A673 (cell line): ENCODE measurements at regions of chr7 and their contacts with region 1.

Region 1: DNA sequence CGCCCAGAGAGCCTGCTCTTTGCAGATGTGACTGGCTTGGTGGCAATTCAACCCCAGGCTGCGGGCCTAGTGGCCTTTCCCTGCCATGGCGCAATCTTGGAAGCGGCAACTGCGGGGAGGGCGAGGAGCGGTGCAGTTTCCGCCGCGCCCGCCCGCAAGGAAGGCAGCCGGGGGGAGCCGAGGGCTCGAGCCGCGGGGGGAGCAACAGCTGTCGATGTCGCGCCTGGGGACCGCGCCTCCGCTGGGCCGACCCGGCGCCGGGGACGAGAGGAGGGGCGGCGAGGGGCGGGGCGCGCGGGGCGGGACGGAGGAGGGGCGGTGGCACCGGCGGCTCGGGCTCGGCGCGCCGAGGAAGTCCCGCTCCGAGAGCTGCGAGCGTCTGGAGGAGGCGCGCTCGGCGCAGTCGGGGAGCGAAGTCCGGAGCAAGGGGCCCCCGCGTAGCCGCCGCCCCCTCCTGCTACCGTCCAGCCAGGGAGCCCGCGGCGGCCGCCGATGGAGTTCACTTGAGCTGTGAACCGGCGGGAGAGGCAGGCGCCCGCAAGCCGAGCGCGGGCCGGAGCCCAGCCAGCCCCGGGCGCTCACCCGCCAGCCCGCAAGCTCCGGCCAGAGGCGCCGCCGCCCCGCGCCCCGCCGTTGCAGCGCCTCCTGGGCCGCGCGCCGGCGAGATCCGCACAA is 438.1 kb upstream of the GALNT17 start:
- DNase-seq: peak; percentile 73
- H3K4me3 ChIP-seq: peak overlapping the region; percentile 82
- H3K27ac ChIP-seq: no peak overlapping the region
- H3K4me1 ChIP-seq: peaks cover 22% of the 10 kb centered on the region
- H3K27me3 ChIP-seq: peaks cover 19% of the 10 kb centered on the region
- CTCF ChIP-seq: no peak

Region 2: DNA sequence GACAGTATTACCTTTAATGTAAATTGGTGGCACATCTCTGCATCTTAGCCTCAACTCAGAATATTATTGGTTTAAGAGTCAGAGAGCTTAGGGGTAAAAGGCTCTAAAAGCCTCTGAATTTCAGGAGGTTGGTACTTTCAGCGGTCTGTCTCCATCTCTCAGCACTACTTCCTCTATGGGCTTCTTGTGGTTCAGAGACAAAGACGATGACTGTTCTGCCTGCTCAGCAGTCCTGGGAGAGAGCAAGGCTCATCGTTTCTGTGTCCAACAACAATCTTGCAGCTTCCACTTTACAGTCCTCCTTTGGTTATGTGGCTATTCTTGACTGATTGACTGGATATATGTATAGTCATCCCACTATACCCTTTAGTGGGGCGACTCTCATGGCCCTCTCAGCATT is 700.9 kb before region 1 on chr7:
- CTCF ChIA-PET with region 1: no interaction called
- POLR2A ChIA-PET with region 1: interaction called, 11 read pairs
- intact Hi-C with region 1: no loop called
- DNase-seq: no peak
- H3K4me3 ChIP-seq: no peak overlapping the region
- H3K27ac ChIP-seq: no peak overlapping the region
- H3K4me1 ChIP-seq: peaks cover 11% of the 10 kb centered on the region
- H3K27me3 ChIP-seq: no peaks in the 10 kb centered on the region
- CTCF ChIP-seq: no peak

Region 3: GRCh38 chr7:70072220-70072619 is 621.6 kb before region 1 on chr7:
- CTCF ChIA-PET with region 1: no interaction called
- POLR2A ChIA-PET with region 1: interaction called, 17 read pairs
- intact Hi-C with region 1: no loop called
- DNase-seq: no peak
- H3K4me3 ChIP-seq: no peak overlapping the region
- H3K27ac ChIP-seq: no peak overlapping the region
- H3K4me1 ChIP-seq: no peaks in the 10 kb centered on the region
- H3K27me3 ChIP-seq: no peaks in the 10 kb centered on the region
- CTCF ChIP-seq: no peak

Region 4: GRCh38 chr7:70098133-70098561 is 595.7 kb before region 1 on chr7:
- CTCF ChIA-PET with region 1: no interaction called
- POLR2A ChIA-PET with region 1: interaction called, 11 read pairs
- intact Hi-C with region 1: no loop called
- DNase-seq: peak; percentile 95
- H3K4me3 ChIP-seq: no peak overlapping the region
- H3K27ac ChIP-seq: no peak overlapping the region
- H3K4me1 ChIP-seq: peaks cover 47% of the 10 kb centered on the region
- H3K27me3 ChIP-seq: peaks cover 56% of the 10 kb centered on the region
- CTCF ChIP-seq: no peak

Region 5: GRCh38 chr7:70156057-70156456 is 537.8 kb before region 1 on chr7:
- CTCF ChIA-PET with region 1: no interaction called
- POLR2A ChIA-PET with region 1: no interaction called
- intact Hi-C with region 1: loop called (anchors 2 kb)
- DNase-seq: no peak
- H3K4me3 ChIP-seq: no peak overlapping the region
- H3K27ac ChIP-seq: no peak overlapping the region
- H3K4me1 ChIP-seq: peaks cover 4% of the 10 kb centered on the region
- H3K27me3 ChIP-seq: no peaks in the 10 kb centered on the region
- CTCF ChIP-seq: no peak

Region 6: GRCh38 chr7:70193514-70193913 is 500.3 kb before region 1 on chr7:
- CTCF ChIA-PET with region 1: no interaction called
- POLR2A ChIA-PET with region 1: no interaction called
- intact Hi-C with region 1: loop called (anchors 5 kb)
- DNase-seq: peak; percentile 39
- H3K4me3 ChIP-seq: no peak overlapping the region
- H3K27ac ChIP-seq: no peak overlapping the region
- H3K4me1 ChIP-seq: peaks cover 7% of the 10 kb centered on the region
- H3K27me3 ChIP-seq: no peaks in the 10 kb centered on the region
- CTCF ChIP-seq: peak; percentile 55

Region 7: GRCh38 chr7:70512761-70513160 is 181.1 kb before region 1 on chr7:
- CTCF ChIA-PET with region 1: no interaction called
- POLR2A ChIA-PET with region 1: no interaction called
- intact Hi-C with region 1: loop called (anchors 10 kb)
- DNase-seq: no peak
- H3K4me3 ChIP-seq: no peak overlapping the region
- H3K27ac ChIP-seq: no peak overlapping the region
- H3K4me1 ChIP-seq: no peaks in the 10 kb centered on the region
- H3K27me3 ChIP-seq: no peaks in the 10 kb centered on the region
- CTCF ChIP-seq: no peak